GM13977 (cell line): ENCODE measurements at regions of chr12 and their contacts with region 1.

Region 1: GRCh38 chr12:48157018-48157888 is at the start of gene ASB8:
- DNase-seq: peak; percentile 95
- CTCF ChIP-seq: no peak

Region 2: GRCh38 chr12:47742253-47742825 is 414.9 kb before region 1 on chr12:
- in situ Hi-C with region 1: loop called (anchors 25 kb)
- DNase-seq: peak; percentile 68
- CTCF ChIP-seq: peak; percentile 88